AG04449 (cell line): ENCODE measurements at regions of chr5 and their contacts with region 1.

Region 1: GRCh38 chr5:71475788-71476384 is 20.4 kb downstream of the BDP1 start:
- DNase-seq: no peak
- H3K4me3 ChIP-seq: no peak overlapping the region
- CTCF ChIP-seq: peak; percentile 45

Region 2: DNA sequence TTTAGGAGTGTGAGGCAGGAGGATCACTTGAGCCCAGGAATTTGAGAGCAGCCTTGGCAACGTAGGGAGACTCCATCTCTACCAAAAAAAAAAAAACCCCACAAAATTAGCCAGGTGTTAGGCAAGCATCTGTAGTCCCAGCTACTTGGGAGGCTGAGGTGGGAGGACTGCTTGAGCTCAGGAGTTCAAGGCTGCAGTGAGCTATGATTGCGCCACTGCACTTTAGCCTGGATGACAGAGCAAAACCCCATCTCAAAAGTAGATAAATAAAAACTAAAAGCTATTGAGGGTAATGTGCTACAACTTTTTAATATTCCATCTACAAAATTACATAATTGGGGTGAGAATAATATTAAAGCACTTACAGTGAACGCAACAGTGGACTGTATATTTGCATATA is 14.5 kb before region 1 on chr5:
- CTCF ChIA-PET with region 1: interaction called, 30 read pairs
- POLR2A ChIA-PET with region 1: no interaction called
- DNase-seq: no peak
- H3K4me3 ChIP-seq: no peak overlapping the region
- CTCF ChIP-seq: no peak

Region 3: DNA sequence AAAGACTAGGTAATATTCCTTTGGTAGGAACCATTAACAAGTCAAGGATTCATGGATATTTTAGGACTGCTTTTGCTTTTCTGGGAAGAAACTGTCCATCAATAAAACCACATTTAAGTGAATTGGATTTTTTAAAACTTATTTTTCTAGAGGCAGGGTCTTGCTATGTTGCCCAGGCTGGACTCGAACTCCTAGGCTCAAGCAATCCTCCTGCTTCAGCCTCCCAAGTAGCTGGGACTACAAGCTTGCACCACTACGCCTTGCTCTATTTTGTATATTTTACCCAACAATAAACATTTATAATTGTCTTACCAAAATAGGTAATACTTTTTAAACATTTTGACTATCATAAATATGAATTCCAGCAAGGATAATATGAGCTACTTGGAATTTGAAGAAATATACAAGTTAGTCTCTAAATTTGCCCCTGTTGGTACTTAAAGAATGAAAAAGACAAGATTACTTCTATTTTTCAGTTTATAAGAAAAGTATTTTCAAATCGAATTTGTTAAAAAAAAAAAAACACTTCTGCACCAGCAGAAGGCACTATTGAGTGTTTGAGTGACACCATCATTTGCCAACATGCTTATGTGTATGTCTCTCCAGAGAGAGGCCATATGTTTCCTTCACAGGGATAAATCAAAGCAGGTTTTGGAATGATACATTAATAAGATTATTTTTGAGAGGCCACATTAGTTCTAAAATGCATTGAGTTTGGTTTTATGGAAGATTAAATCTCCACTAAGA is 183.2 kb after region 1 on chr5:
- CTCF ChIA-PET with region 1: no interaction called
- POLR2A ChIA-PET with region 1: no interaction called
- DNase-seq: no peak
- H3K4me3 ChIP-seq: no peak overlapping the region
- CTCF ChIP-seq: no peak

Region 4: GRCh38 chr5:71714871-71715270 is 239.0 kb after region 1 on chr5:
- CTCF ChIA-PET with region 1: no interaction called
- POLR2A ChIA-PET with region 1: no interaction called
- DNase-seq: no peak
- H3K4me3 ChIP-seq: no peak overlapping the region
- CTCF ChIP-seq: no peak

Region 5: GRCh38 chr5:71757590-71758543 is 282.0 kb after region 1 on chr5:
- CTCF ChIA-PET with region 1: interaction called, 42 read pairs
- POLR2A ChIA-PET with region 1: no interaction called
- DNase-seq: peak; percentile 5
- H3K4me3 ChIP-seq: no peak overlapping the region
- CTCF ChIP-seq: peak; percentile 67